Naive thymus-derived CD4-positive, alpha-beta T cell (primary cell): ENCODE measurements at regions of chr4 and their contacts with region 1.

Region 1: DNA sequence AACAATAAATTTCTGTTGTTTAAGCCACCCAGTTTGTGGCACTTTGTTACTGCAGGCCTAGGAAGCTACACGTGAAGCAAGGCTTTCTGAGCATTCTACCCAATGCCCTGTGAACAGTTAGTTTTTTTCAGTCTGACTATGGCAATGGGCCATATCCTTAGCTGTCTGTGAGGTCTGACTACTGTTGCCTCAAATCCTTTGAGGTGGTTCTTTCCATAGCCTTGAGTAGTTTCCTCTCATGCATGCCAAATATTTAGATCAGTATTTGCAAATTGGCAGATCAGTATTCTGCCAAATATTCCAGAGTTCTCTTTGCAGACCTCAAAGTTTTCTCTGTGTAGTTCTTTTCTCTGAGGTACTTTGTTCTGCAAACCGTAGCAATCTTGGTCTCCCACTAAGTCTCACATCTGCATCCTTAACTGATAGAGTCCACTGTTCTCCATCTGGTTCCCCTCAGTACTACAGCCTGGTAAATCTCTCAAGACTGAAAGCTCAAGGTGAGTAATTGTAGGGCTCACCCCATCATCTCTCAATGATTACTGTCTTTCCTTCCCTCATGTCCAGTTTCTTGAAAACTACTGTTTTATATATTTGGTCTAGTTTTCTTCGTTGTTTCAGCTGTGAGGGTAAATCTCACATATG is 984.9 kb upstream of the INTU start:
- DNase-seq: no peak
- ATAC-seq: no peak
- H3K4me3 ChIP-seq: no peak overlapping the region
- H3K4me3 Mint-ChIP-seq: no peak overlapping the region
- H3K27ac ChIP-seq: no peak overlapping the region
- H3K27ac Mint-ChIP-seq: no peak overlapping the region
- H3K4me1 ChIP-seq: no peaks in the 10 kb centered on the region
- H3K4me1 Mint-ChIP-seq: no peaks in the 10 kb centered on the region
- H3K27me3 ChIP-seq: no peaks in the 10 kb centered on the region
- H3K27me3 Mint-ChIP-seq: no peaks in the 10 kb centered on the region

Region 2: GRCh38 chr4:126616795-126617194 is 31.1 kb before region 1 on chr4:
- CTCF ChIA-PET with region 1: no interaction called
- POLR2A ChIA-PET with region 1: no interaction called
- intact Hi-C with region 1: loop called in 1 of 2 experiments (anchors 1 kb)
- DNase-seq: no peak
- ATAC-seq: no peak
- H3K4me3 ChIP-seq: no peak overlapping the region
- H3K4me3 Mint-ChIP-seq: no peak overlapping the region
- H3K27ac ChIP-seq: no peak overlapping the region
- H3K27ac Mint-ChIP-seq: no peak overlapping the region
- H3K4me1 ChIP-seq: no peaks in the 10 kb centered on the region
- H3K4me1 Mint-ChIP-seq: peaks cover 0 to 5% (median 0%) of the 10 kb centered on the region in 7 donors
- H3K27me3 ChIP-seq: no peaks in the 10 kb centered on the region
- H3K27me3 Mint-ChIP-seq: no peaks in the 10 kb centered on the region